CD4-positive, alpha-beta memory T cell (primary cell): ENCODE measurements at regions of chr1 and their contacts with region 1.

Region 1: DNA sequence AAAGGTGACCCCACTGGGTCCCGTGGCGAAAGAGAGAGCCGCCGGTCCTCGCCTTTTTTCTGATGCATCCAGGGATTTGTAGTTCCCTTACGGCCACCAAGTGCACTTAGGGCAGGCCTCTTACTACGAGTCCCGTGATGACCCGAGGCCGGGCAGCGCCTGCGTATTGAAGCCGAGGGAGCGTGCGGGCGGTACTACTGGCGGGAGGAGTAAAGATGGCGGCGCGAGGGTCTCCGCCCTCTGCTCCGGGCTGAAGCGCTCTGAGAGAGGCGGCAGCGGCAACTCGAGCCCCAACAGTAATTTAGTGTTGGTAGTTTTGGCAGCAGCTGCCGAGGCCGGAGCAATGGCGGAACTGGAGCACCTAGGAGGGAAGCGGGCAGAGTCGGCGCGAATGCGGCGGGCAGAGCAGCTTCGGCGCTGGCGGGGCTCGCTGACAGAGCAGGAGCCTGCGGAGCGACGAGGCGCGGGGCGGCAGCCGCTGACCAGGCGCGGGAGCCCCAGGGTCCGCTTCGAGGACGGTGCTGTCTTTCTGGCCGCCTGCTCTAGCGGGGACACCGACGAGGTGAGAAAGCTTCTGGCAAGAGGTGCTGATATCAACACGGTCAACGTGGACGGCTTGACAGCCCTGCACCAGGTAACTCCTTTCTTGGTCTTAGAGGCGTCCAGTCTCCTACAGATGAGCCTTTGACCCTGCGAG is at the start of gene PPP1R12B:
- DNase-seq: peak; percentile 93 to 98 (median 95)
- H3K4me3 ChIP-seq: peak within 1 kb of the TSS; percentile 79 to 90
- H3K4me3 Mint-ChIP-seq: peak within 1 kb of the TSS; percentile 91 to 97 (median 92)
- H3K27ac ChIP-seq: peak within 1 kb of the TSS; percentile 82
- H3K27ac Mint-ChIP-seq: peak within 1 kb of the TSS; percentile 84 to 97 (median 94)
- H3K4me1 ChIP-seq: peaks cover 25% of the 10 kb centered on the region
- H3K4me1 Mint-ChIP-seq: peaks cover 16 to 42% (median 30%) of the 10 kb centered on the region in 4 donors
- H3K27me3 ChIP-seq: no peaks in the 10 kb centered on the region
- H3K27me3 Mint-ChIP-seq: no peaks in the 10 kb centered on the region
- total RNA-seq, gene PPP1R12B: 28.2 to 33.7 TPM

Region 2: DNA sequence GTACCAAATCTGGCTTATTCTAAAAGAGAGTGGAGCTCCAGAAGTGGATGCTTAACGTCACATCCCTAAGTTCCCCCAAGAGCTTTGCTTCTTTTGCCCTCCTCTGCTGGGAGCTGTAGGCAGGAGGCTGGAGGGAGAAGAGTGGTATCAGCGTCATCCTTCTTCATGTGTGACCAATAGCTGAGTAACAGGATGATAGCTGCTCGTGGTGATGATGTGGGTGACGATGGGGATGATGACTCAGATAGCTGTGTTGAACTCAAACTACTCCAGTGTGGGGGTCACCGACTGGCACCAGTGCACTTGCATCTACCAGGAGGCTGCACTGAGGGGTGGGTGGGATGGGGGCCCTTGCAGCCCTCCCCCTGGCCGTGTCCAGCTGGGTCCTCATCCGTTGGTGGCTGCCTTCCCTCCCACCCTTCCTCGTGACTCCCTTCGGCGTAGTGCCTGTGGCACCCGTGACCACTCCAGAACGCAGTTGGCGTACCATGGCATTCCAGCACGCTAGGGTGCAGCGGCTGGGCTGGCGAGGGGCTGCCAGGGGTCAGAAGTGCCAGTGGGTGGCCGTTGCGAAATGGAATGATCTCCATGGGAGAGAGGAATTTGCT is 1156.9 kb before region 1 on chr1:
- CTCF ChIA-PET with region 1: no interaction called
- POLR2A ChIA-PET with region 1: no interaction called
- intact Hi-C with region 1: no loop called
- DNase-seq: no peak
- H3K4me3 ChIP-seq: no peak overlapping the region
- H3K4me3 Mint-ChIP-seq: no peak overlapping the region
- H3K27ac ChIP-seq: no peak overlapping the region
- H3K27ac Mint-ChIP-seq: no peak overlapping the region
- H3K4me1 ChIP-seq: no peaks in the 10 kb centered on the region
- H3K4me1 Mint-ChIP-seq: no peaks in the 10 kb centered on the region
- H3K27me3 ChIP-seq: no peaks in the 10 kb centered on the region
- H3K27me3 Mint-ChIP-seq: peaks cover 13% of the 10 kb centered on the region in 2 donors

Region 3: DNA sequence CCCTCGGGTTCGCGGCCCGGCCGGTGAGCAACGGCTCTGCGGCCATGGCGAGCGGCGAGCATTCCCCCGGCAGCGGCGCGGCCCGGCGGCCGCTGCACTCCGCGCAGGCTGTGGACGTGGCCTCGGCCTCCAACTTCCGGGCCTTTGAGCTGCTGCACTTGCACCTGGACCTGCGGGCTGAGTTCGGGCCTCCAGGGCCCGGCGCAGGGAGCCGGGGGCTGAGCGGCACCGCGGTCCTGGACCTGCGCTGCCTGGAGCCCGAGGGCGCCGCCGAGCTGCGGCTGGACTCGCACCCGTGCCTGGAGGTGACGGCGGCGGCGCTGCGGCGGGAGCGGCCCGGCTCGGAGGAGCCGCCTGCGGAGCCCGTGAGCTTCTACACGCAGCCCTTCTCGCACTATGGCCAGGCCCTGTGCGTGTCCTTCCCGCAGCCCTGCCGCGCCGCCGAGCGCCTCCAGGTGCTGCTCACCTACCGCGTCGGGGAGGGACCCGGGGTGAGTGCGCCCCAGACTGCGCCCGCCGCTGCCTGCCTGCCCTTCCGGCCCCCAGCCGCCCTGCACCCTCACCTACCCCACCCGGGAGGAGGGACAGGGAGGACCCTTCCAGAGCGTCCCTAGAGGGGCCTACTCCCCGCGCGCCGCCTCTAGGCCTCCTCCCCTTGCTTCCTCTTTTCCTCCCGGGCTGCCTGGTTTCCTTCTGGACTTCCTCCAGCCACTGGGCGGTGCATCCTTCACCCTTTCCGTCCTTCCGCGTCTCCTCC is 365.9 kb before region 1 on chr1 and contains the start of gene RNPEP:
- CTCF ChIA-PET with region 1: no interaction called
- POLR2A ChIA-PET with region 1: no interaction called
- intact Hi-C with region 1: no loop called
- DNase-seq: peak; percentile 50 to 71 (median 60)
- H3K4me3 ChIP-seq: peak within 1 kb of the TSS; percentile 52 to 77
- H3K4me3 Mint-ChIP-seq: peak within 1 kb of the TSS; percentile 92 to 100 (median 98)
- H3K27ac ChIP-seq: peak within 1 kb of the TSS; percentile 63
- H3K27ac Mint-ChIP-seq: peak within 1 kb of the TSS; percentile 81 to 98 (median 94)
- H3K4me1 ChIP-seq: peaks cover 17% of the 10 kb centered on the region
- H3K4me1 Mint-ChIP-seq: peaks cover 18 to 25% (median 22%) of the 10 kb centered on the region in 4 donors
- H3K27me3 ChIP-seq: no peaks in the 10 kb centered on the region
- H3K27me3 Mint-ChIP-seq: no peaks in the 10 kb centered on the region
- total RNA-seq, gene RNPEP: 25.9 to 29.1 TPM

Region 4: DNA sequence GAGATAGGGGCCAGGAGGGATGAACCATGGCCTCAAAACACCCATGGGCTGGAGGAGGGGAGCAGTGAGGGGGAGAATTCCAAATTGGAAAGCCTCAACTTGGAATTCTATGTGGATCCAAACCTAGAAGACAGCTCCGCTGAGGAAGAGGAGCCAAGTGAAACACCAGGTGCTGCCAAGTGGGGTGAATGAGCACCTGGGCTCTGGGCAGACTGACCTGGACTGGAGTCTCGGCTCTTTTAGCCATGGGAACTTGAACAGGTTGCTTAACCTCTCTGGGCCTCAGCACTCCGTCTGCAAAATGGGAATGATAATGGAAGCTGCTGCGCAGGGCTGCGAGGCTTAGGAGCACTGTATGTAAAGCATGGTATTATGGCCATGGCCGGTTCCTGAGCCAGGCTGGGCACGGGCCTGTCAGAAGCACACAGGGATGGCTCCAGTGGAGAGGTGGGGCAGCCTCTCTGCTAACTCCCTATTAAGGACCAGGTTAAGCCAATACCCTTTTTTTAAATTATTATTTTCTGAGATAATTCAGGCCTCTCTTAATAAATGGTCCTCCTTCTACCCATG is 280.1 kb after region 1 on chr1:
- CTCF ChIA-PET with region 1: no interaction called
- POLR2A ChIA-PET with region 1: interaction called, 4 read pairs
- intact Hi-C with region 1: loop called (anchors 2 kb)
- DNase-seq: no peak
- H3K4me3 ChIP-seq: no peak overlapping the region
- H3K4me3 Mint-ChIP-seq: peak overlapping the region; percentile 61 to 82 (median 78)
- H3K27ac ChIP-seq: no peak overlapping the region
- H3K27ac Mint-ChIP-seq: peak overlapping the region in 6 of 7 donors; percentile 17 to 86 (median 62)
- H3K4me1 ChIP-seq: peaks cover 58% of the 10 kb centered on the region
- H3K4me1 Mint-ChIP-seq: peaks cover 22 to 55% (median 33%) of the 10 kb centered on the region in 4 donors
- H3K27me3 ChIP-seq: no peaks in the 10 kb centered on the region
- H3K27me3 Mint-ChIP-seq: peaks cover 4 to 11% of the 10 kb centered on the region in 2 donors

Region 5: GRCh38 chr1:202810615-202811295 is 462.1 kb after region 1 on chr1 and contains the start of gene PCAT6:
- CTCF ChIA-PET with region 1: no interaction called
- POLR2A ChIA-PET with region 1: no interaction called
- intact Hi-C with region 1: loop called (anchors 1 kb)
- DNase-seq: peak; percentile 82 to 88 (median 83)
- H3K4me3 ChIP-seq: peak within 1 kb of the TSS; percentile 88 to 93
- H3K4me3 Mint-ChIP-seq: peak within 1 kb of the TSS; percentile 89 to 97 (median 94)
- H3K27ac ChIP-seq: peak within 1 kb of the TSS; percentile 49
- H3K27ac Mint-ChIP-seq: peak within 1 kb of the TSS; percentile 71 to 96 (median 92)
- H3K4me1 ChIP-seq: peaks cover 36% of the 10 kb centered on the region
- H3K4me1 Mint-ChIP-seq: peaks cover 26 to 45% (median 35%) of the 10 kb centered on the region in 4 donors
- H3K27me3 ChIP-seq: no peaks in the 10 kb centered on the region
- H3K27me3 Mint-ChIP-seq: peaks cover 0 to 1% of the 10 kb centered on the region in 2 donors
- total RNA-seq, gene PCAT6: not detected

Region 6: GRCh38 chr1:203006948-203007871 is 658.6 kb after region 1 on chr1 and contains the start of gene TMEM183A:
- CTCF ChIA-PET with region 1: no interaction called
- POLR2A ChIA-PET with region 1: no interaction called
- intact Hi-C with region 1: loop called (anchors 1 kb)
- DNase-seq: peak; percentile 92 to 96 (median 93)
- H3K4me3 ChIP-seq: peak within 1 kb of the TSS; percentile 75 to 97
- H3K4me3 Mint-ChIP-seq: peak within 1 kb of the TSS; percentile 91 to 99 (median 94)
- H3K27ac ChIP-seq: peak within 1 kb of the TSS; percentile 93
- H3K27ac Mint-ChIP-seq: peak within 1 kb of the TSS; percentile 97 to 99 (median 98)
- H3K4me1 ChIP-seq: peaks cover 32% of the 10 kb centered on the region
- H3K4me1 Mint-ChIP-seq: peaks cover 18 to 46% (median 33%) of the 10 kb centered on the region in 4 donors
- H3K27me3 ChIP-seq: no peaks in the 10 kb centered on the region
- H3K27me3 Mint-ChIP-seq: no peaks in the 10 kb centered on the region
- total RNA-seq, gene TMEM183A: 69.3 to 70.3 TPM

Region 7: GRCh38 chr1:203861379-203862184 is 1512.9 kb after region 1 on chr1 and contains the start of gene SNRPE:
- CTCF ChIA-PET with region 1: no interaction called
- POLR2A ChIA-PET with region 1: no interaction called
- intact Hi-C with region 1: loop called (anchors 10 kb)
- DNase-seq: peak; percentile 96 to 98 (median 98)
- H3K4me3 ChIP-seq: peak within 1 kb of the TSS; percentile 95 to 98
- H3K4me3 Mint-ChIP-seq: peak within 1 kb of the TSS; percentile 99 to 100 (median 100)
- H3K27ac ChIP-seq: peak within 1 kb of the TSS; percentile 82
- H3K27ac Mint-ChIP-seq: peak within 1 kb of the TSS; percentile 97 to 99 (median 98)
- H3K4me1 ChIP-seq: peaks cover 15% of the 10 kb centered on the region
- H3K4me1 Mint-ChIP-seq: peaks cover 15 to 33% (median 24%) of the 10 kb centered on the region in 4 donors
- H3K27me3 ChIP-seq: no peaks in the 10 kb centered on the region
- H3K27me3 Mint-ChIP-seq: no peaks in the 10 kb centered on the region
- total RNA-seq, gene SNRPE: 63.3 to 69.9 TPM